ENCODE measurements at regions of chr10 and their contacts with region 1.

Region 1: DNA sequence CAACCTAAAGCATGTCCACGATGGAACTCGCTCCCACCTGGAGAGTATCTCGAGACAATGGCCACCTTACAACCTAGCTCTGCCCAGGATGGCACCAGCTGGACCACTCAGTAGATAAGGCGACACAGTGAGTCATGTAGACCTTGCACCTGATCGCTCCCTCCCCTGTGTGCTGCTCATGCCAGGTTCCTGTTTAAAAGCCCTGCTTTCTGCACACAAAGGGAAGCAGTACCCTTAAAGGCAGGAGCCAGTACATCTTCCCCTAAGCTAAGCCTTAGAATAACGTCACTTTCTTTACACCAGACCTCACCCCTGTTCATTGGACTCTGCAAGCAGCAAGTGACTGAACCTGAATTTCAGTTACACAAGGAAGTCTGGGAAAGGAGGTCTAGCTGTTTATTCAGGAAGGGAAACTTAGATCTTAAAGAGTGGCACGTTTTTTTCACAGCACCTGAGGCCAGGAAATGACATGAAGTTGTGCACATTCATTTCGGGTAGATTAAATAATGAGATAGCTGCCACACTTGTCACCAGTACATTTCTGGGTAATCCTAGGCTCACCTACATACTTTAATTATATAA is 117.9 kb downstream of the MTPAP start:
- DNase-seq: peak in 1 of 5 donors; percentile 29
- H3K4me3 ChIP-seq: no peak overlapping the region
- H3K27ac ChIP-seq: no peak overlapping the region
- H3K4me1 ChIP-seq: no peaks in the 10 kb centered on the region
- H3K27me3 ChIP-seq: no peaks in the 10 kb centered on the region
- CTCF ChIP-seq: no peak

Region 2: DNA sequence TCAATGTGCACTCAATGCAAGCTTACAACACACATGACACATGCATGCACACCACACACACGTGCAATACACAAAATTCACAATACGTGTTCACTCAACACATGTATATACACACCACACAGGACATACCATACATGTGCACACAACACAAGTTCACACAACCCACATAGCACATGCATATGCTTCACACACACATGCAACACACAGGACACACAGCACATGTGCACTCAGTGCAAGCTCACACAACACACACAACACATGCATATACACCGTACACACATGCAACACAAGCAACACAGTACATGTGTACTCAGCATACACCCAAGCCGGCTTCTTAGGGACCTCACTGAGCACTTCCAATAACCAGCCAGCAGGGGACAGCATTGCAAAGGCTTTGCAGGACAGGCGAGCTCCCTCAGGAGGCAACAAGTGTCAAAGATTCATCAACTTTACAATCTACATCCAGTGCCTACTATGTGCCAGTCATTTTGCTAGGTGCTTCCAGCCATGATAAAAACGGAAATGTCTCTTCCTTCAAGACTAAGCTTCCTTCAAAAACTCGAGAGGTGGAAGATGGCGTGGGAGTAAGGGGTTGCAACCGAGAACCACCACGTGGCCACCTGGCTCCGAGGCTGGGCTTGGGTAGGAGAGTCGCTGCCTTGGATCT is 232.9 kb before region 1 on chr10:
- intact Hi-C with region 1: loop called (anchors 10 kb)
- DNase-seq: peak; percentile 81 to 92 (median 84)
- H3K4me3 ChIP-seq: no peak overlapping the region
- H3K27ac ChIP-seq: no peak overlapping the region
- H3K4me1 ChIP-seq: peaks cover 0 to 12% (median 12%) of the 10 kb centered on the region in 3 donors
- H3K27me3 ChIP-seq: no peaks in the 10 kb centered on the region
- CTCF ChIP-seq: peak; percentile 99